Prostate gland (tissue), 2 donors: ENCODE measurements at regions of chr2 and their contacts with region 1.

Region 1: GRCh38 chr2:190853531-190854383 is 26.9 kb upstream of the GLS start:
- DNase-seq: no peak
- H3K4me3 ChIP-seq: no peak overlapping the region
- H3K27ac ChIP-seq: no peak overlapping the region
- H3K4me1 ChIP-seq: no peaks in the 10 kb centered on the region
- H3K27me3 ChIP-seq: no peaks in the 10 kb centered on the region
- CTCF ChIP-seq: no peak
- POLR2A ChIP-seq: no peak

Region 2: GRCh38 chr2:191020221-191020741 is 166.5 kb after region 1 on chr2:
- intact Hi-C with region 1: loop called (anchors 5 kb)
- DNase-seq: peak; percentile 92
- H3K4me3 ChIP-seq: peak overlapping the region; percentile 63 to 64
- H3K27ac ChIP-seq: peak overlapping the region; percentile 73 to 80
- H3K4me1 ChIP-seq: no peaks in the 10 kb centered on the region
- H3K27me3 ChIP-seq: no peaks in the 10 kb centered on the region
- CTCF ChIP-seq: peak in 2 of 4 experiments; percentile 46 to 55
- POLR2A ChIP-seq: peak; percentile 78